T-cell (primary cell): ENCODE measurements at regions of chrX and their contacts with region 1.

Region 1: GRCh38 chrX:107672955-107673378 is 44.7 kb downstream of the PRPS1 start:
- DNase-seq: peak; percentile 64 to 91 (median 81)
- ATAC-seq: peak; percentile 51 to 57 (median 56)
- H3K4me3 ChIP-seq: peak overlapping the region in 1 of 2 donors; percentile 32
- H3K4me3 Mint-ChIP-seq: peak overlapping the region; percentile 61 to 76 (median 72)
- H3K27ac ChIP-seq: peak overlapping the region; percentile 99
- H3K27ac Mint-ChIP-seq: peak overlapping the region; percentile 93 to 99
- H3K4me1 ChIP-seq: peaks cover 22 to 62% of the 10 kb centered on the region in 2 experiments
- H3K4me1 Mint-ChIP-seq: peaks cover 48 to 65% (median 64%) of the 10 kb centered on the region in 3 donors
- H3K27me3 ChIP-seq: no peaks in the 10 kb centered on the region
- H3K27me3 Mint-ChIP-seq: peaks cover 0 to 5% of the 10 kb centered on the region in 2 donors

Region 2: GRCh38 chrX:107627838-107628661 is 44.9 kb before region 1 on chrX and contains the start of gene PRPS1:
- CTCF ChIA-PET with region 1: interaction called, 3 to 14 read pairs
- POLR2A ChIA-PET with region 1: interaction called in 1 of 2 experiments, 9 read pairs
- DNase-seq: peak; percentile 69 to 92 (median 87)
- ATAC-seq: peak; percentile 96 to 98 (median 97)
- H3K4me3 ChIP-seq: peak within 1 kb of the TSS; percentile 71 to 87
- H3K4me3 Mint-ChIP-seq: peak within 1 kb of the TSS; percentile 87 to 95 (median 93)
- H3K27ac ChIP-seq: peak within 1 kb of the TSS; percentile 86
- H3K27ac Mint-ChIP-seq: peak within 1 kb of the TSS; percentile 88
- H3K4me1 ChIP-seq: peaks cover 7% of the 10 kb centered on the region in 2 experiments
- H3K4me1 Mint-ChIP-seq: peaks cover 32 to 36% (median 32%) of the 10 kb centered on the region in 3 donors
- H3K27me3 ChIP-seq: no peaks in the 10 kb centered on the region
- H3K27me3 Mint-ChIP-seq: peaks cover 0 to 31% of the 10 kb centered on the region in 2 donors
- total RNA-seq, gene PRPS1: 57.9 to 74.0 (median 60.7) TPM

Region 3: DNA sequence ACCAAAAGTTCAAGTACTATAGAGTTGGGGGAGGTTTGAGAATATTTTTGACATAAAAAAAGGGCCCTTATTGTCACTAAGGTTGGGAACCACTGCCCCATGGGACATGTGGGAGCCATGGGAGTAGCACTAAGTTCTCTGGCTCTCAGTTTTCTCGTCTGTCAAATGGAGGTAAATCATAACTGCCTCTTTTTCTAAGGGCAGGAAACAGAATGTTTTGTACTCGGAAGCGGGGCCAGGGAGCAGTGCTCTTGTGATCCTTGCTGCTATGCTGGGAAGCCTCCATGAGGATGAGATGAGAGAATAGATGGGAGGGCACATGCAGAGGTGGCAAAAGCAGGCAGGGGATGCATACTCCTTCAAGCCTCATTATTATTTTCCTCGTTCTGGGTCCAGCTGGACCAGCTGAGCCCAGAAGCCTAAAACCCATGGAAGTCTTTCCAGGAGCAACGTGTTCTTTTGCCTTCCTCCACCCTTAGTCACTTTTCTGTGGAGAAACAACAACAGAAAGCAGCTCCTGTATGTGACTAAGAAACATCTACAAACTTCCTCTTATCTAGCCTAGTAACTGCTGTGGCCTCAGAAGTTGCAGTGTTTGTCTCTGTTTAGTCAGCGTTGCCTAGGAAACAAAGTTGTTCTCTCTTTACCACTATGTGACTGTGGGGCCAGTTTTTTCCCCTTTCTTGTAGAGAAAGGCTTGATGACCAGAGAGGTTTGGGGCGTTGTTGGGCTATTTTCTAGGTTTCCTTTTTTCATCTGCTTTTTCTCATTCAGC is 37.8 kb after region 1 on chrX:
- CTCF ChIA-PET with region 1: interaction called, 30 to 99 read pairs
- POLR2A ChIA-PET with region 1: interaction called, 269 to 572 read pairs
- DNase-seq: peak in 30 of 35 experiments; percentile 7 to 90 (median 56)
- ATAC-seq: peak; percentile 43 to 84 (median 76)
- H3K4me3 ChIP-seq: peak overlapping the region in 1 of 2 donors; percentile 27
- H3K4me3 Mint-ChIP-seq: peak overlapping the region; percentile 66 to 89 (median 74)
- H3K27ac ChIP-seq: peak overlapping the region; percentile 99
- H3K27ac Mint-ChIP-seq: peak overlapping the region; percentile 98 to 100
- H3K4me1 ChIP-seq: peaks cover 14 to 55% of the 10 kb centered on the region in 2 experiments
- H3K4me1 Mint-ChIP-seq: peaks cover 68 to 74% (median 71%) of the 10 kb centered on the region in 3 donors
- H3K27me3 ChIP-seq: no peaks in the 10 kb centered on the region
- H3K27me3 Mint-ChIP-seq: peaks cover 0 to 6% of the 10 kb centered on the region in 2 donors

Region 4: GRCh38 chrX:107716816-107717700 is 44.1 kb after region 1 on chrX:
- CTCF ChIA-PET with region 1: interaction called, 43 to 99 read pairs
- POLR2A ChIA-PET with region 1: interaction called, 269 to 572 read pairs
- DNase-seq: peak; percentile 77 to 94 (median 89)
- ATAC-seq: peak; percentile 71 to 87 (median 84)
- H3K4me3 ChIP-seq: peak overlapping the region; percentile 88 to 94
- H3K4me3 Mint-ChIP-seq: peak overlapping the region; percentile 89 to 96 (median 95)
- H3K27ac ChIP-seq: peak overlapping the region; percentile 99
- H3K27ac Mint-ChIP-seq: peak overlapping the region; percentile 94 to 100
- H3K4me1 ChIP-seq: peaks cover 11 to 51% of the 10 kb centered on the region in 2 experiments
- H3K4me1 Mint-ChIP-seq: peaks cover 49 to 59% (median 58%) of the 10 kb centered on the region in 3 donors
- H3K27me3 ChIP-seq: no peaks in the 10 kb centered on the region
- H3K27me3 Mint-ChIP-seq: peaks cover 0 to 8% of the 10 kb centered on the region in 2 donors

Region 5: GRCh38 chrX:107741404-107741790 is 68.4 kb after region 1 on chrX:
- CTCF ChIA-PET with region 1: interaction called, 3 to 16 read pairs
- POLR2A ChIA-PET with region 1: interaction called, 3 to 13 read pairs
- DNase-seq: peak in 3 of 35 experiments; percentile 1 to 3 (median 1)
- ATAC-seq: peak in 3 of 4 experiments; percentile 8 to 19 (median 9)
- H3K4me3 ChIP-seq: peak overlapping the region; percentile 21 to 25
- H3K4me3 Mint-ChIP-seq: peak overlapping the region; percentile 71 to 91 (median 77)
- H3K27ac ChIP-seq: peak overlapping the region; percentile 84
- H3K27ac Mint-ChIP-seq: peak overlapping the region; percentile 96 to 98
- H3K4me1 ChIP-seq: peaks cover 12 to 57% of the 10 kb centered on the region in 2 experiments
- H3K4me1 Mint-ChIP-seq: peaks cover 42 to 51% (median 46%) of the 10 kb centered on the region in 3 donors
- H3K27me3 ChIP-seq: no peaks in the 10 kb centered on the region
- H3K27me3 Mint-ChIP-seq: peaks cover 4 to 11% of the 10 kb centered on the region in 2 donors